BJ (cell line): ENCODE measurements at regions of chr7 and their contacts with region 1.

Region 1: DNA sequence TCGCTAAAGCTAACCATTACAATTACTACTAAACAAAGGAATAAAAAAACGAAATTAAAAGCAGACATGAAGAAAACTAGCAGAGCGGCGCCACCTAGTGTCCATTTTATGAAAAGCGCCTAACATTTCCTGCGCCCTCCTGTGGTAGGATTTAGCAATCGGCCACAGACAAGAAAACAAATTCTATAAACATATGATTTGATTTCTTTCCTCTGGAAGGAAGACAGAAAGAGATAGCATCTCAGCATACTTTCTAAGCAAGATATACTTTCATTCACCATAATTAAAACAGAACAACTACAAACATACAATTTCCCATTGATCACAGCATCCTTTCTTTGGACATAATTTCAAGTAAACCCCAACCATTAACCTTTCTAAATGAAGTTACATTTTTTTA is 337.7 kb upstream of the NPVF start:
- DNase-seq: peak; percentile 15
- H3K4me3 ChIP-seq: no peak overlapping the region
- H3K27me3 ChIP-seq: peaks cover 3% of the 10 kb centered on the region; the same call in 1 of the 2 replicates
- CTCF ChIP-seq: peak; percentile 100

Region 2: DNA sequence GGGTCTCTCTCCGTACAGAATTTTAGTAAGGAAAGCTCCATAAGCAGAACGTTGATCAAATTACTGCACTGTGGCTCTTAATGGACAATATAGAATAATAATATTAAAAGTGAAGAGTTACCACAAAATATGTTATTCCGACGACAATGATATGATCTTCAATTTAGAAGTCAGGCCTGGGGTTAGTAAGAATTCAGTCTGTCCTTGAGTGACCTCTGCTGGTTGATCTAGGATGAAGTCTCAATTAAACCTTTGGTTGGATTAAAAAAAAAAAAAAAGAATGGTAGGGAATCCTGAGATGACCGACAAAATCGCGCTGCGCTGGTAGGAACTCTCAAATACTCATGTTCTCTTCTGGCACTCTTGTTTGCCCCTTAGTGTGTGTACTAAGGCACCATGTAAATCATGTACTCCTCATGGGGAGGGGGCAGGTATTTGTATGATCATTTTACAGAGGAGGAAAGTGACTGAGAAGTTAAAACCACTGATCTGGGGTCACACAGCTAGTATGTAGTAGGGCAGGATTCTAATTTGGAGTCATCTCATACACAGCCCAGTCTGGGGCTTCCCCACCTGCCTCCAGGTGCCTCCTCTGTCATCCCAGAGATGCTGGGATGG is 176.4 kb before region 1 on chr7:
- CTCF ChIA-PET with region 1: interaction called, 10 read pairs
- POLR2A ChIA-PET with region 1: interaction called, 4 read pairs
- DNase-seq: no peak
- H3K4me3 ChIP-seq: no peak overlapping the region
- H3K27me3 ChIP-seq: no peaks in the 10 kb centered on the region; the same call in none of the 2 replicates
- CTCF ChIP-seq: peak; percentile 54

Region 3: DNA sequence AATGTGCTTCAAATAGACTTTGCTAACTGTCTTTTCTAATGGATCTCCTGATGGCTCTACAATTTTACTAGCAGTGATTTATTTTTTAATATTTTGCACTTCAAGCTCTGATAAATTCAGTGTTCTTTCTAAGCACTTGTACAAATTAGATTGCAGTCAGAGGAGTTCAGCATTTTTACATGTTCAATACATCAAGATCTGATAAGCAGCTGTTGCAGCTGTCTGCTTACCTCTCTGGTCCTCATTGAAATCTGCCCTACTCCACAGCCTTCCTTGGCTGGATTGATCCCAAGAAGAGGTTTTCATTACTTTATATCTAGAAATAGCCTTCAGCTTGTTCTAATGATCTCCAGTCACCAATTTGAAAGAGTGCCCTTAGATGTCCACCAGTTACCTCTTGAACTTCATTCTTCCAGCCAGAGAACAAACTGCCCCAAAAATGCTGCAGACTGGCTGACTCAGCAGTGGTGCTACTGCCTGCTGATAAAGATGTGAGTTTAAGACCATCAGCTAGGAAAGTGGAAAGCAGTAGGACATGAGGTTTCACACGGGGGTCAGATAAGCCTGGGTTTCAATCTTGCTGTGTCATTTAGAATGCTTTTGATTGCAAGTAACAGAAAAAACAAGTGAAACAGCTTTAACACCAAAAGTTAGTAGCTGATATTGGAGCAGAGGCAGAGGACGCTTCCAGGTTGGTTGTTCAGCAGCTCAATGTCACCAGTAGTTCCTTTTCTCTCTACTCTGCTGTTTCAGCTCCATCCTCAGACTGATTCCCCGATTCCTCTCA is 13.2 kb after region 1 on chr7:
- CTCF ChIA-PET with region 1: interaction called, 16 read pairs
- POLR2A ChIA-PET with region 1: no interaction called
- DNase-seq: no peak
- H3K4me3 ChIP-seq: no peak overlapping the region
- H3K27me3 ChIP-seq: no peaks in the 10 kb centered on the region
- CTCF ChIP-seq: no peak